ENCODE measurements at regions of chr15 and their contacts with region 1.

Region 1: GRCh38 chr15:39362821-39363561 is 217.9 kb upstream of the THBS1 start:
- DNase-seq: peak; percentile 98
- H3K4me3 ChIP-seq: no peak overlapping the region
- H3K27me3 ChIP-seq: no peaks in the 10 kb centered on the region
- CTCF ChIP-seq: no peak

Region 2: GRCh38 chr15:39095218-39095879 is 267.6 kb before region 1 on chr15:
- CTCF ChIA-PET with region 1: no interaction called
- POLR2A ChIA-PET with region 1: interaction called, 12 read pairs
- DNase-seq: no peak
- H3K4me3 ChIP-seq: no peak overlapping the region
- H3K27me3 ChIP-seq: no peaks in the 10 kb centered on the region
- CTCF ChIP-seq: no peak

Region 3: DNA sequence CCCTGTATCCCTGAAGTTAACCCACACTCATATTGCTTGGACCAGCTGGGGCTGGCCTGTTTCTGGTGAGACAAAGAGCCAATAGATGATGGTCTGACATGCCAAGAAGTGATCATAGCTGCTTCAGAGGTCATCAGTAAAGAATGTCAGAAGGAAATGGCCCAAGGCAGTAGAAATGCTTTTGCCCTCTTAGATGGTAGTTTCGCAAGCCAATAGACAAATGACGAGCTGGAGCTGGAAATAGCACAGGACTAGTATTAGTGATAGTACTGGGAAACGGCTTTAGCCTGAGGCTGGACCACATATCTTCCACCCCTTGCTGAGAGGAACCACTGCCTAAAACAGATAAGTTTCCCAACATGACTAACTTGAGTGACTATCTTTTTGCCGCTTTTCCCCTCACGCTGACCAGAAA is 41.8 kb after region 1 on chr15:
- CTCF ChIA-PET with region 1: interaction called, 4 read pairs
- POLR2A ChIA-PET with region 1: interaction called, 11 read pairs
- DNase-seq: peak; percentile 99
- H3K4me3 ChIP-seq: no peak overlapping the region
- H3K27me3 ChIP-seq: no peaks in the 10 kb centered on the region
- CTCF ChIP-seq: no peak

Region 4: GRCh38 chr15:39465843-39466749 is 103.1 kb after region 1 on chr15:
- CTCF ChIA-PET with region 1: no interaction called
- POLR2A ChIA-PET with region 1: interaction called, 18 read pairs
- DNase-seq: peak; percentile 94
- H3K4me3 ChIP-seq: no peak overlapping the region
- H3K27me3 ChIP-seq: no peaks in the 10 kb centered on the region
- CTCF ChIP-seq: no peak